ENCODE measurements at regions of chr11 and their contacts with region 1.

Region 1: GRCh38 chr11:5684646-5685362 is at the start of gene TRIM5:
- DNase-seq: peak; percentile 89
- H3K4me3 Mint-ChIP-seq: peak within 1 kb of the TSS; percentile 92
- H3K27ac Mint-ChIP-seq: peak within 1 kb of the TSS; percentile 97
- H3K4me1 Mint-ChIP-seq: peaks cover 35% of the 10 kb centered on the region
- H3K27me3 Mint-ChIP-seq: no peaks in the 10 kb centered on the region
- total RNA-seq, gene TRIM5: 18.9 to 21.0 TPM

Region 2: DNA sequence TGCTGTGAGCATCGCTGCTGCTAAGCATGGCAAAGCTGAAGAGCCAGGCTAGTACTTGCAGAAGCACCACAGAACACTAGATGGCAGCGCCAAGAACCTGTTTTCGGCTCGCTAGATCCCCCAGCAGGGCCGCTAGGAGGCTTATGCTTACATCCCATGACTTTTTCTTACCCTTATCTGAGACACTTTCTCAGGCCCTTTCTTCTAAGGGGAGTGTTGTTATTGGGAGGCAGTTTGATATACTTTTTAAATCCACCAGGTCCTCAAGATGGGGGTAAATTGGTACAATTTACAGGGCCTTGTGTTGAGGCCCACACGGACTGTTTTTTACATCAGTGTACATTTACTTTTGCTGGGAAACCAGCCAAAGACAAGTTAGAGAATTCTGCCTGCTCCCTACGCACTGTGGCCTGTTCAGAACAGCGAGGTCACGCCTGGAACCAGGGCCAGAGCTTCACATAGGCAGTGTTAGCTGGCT is 84.4 kb before region 1 on chr11:
- CTCF ChIA-PET with region 1: interaction called, 7 read pairs
- POLR2A ChIA-PET with region 1: no interaction called
- intact Hi-C with region 1: loop called (anchors 1 kb)
- DNase-seq: peak; percentile 72
- H3K4me3 Mint-ChIP-seq: no peak overlapping the region
- H3K27ac Mint-ChIP-seq: no peak overlapping the region
- H3K4me1 Mint-ChIP-seq: peaks cover 8% of the 10 kb centered on the region
- H3K27me3 Mint-ChIP-seq: peaks cover 8% of the 10 kb centered on the region

Region 3: DNA sequence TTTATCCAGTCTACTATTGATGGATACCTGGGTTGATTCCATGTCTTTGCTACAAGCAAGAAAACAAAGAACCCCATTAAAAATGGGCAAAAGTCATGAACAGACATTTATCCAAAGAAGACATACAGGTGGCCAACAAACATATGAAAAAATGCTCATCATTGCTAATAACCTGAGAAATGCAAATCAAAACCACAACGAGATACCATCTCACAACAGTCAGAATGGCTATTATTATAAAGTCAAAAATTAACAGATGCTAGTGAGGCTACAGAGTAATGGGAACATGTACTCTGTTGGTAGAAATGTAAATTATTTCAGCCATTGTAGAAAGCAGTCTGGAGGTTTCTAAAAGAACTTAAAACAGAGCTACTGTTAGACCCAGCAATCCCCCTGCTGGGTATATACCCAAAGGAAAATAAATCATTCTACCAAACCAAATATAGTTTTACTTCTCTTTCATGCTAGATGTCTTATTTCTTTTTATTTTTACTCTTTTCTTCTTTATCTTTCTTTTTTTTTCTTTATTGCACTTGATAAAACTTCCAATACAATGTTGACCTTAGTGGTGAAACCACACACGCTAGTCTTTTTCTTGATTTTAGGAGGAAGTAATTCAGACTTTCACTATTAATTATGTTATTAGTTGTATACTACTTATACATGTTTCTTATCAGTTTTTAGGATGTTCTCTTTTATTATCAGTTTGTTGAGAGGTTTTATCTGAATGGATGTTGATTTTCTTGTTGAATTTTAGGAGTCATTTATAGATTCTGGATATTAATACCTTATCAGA is 19.1 kb after region 1 on chr11:
- CTCF ChIA-PET with region 1: interaction called, 5 read pairs
- POLR2A ChIA-PET with region 1: interaction called, 3 read pairs
- intact Hi-C with region 1: loop called (anchors 2 kb)
- DNase-seq: no peak
- H3K4me3 Mint-ChIP-seq: no peak overlapping the region
- H3K27ac Mint-ChIP-seq: peak overlapping the region; percentile 38
- H3K4me1 Mint-ChIP-seq: peaks cover 40% of the 10 kb centered on the region
- H3K27me3 Mint-ChIP-seq: no peaks in the 10 kb centered on the region

Region 4: DNA sequence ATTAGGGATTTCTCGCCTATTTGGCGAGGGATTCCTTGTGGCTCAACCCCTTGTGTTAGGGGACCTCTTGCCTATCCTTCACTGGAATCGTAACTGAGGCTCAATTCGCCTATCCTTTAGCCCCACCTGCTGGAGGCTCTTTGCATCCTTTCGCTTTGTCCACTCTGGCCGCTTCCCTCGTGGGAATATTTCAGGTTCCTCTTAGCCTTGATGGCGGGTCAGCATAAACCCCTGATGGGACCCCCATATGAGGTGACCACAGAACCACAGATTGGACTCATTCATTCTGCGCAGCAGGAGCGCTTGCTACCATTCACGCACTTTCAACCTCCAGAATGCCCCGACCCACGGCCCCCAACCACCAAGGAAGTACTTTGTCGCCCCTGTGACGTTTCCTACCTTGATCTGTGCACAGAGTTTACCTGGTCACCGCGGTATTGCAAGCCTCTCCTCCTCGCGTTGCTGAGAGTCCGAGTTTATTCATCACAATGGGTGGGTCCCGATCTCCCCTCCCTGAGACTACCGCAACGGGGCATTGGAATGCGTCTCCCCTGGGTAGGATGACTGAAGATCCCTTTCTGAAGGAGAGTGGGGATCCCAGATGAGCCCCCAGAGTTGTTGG is 123.8 kb after region 1 on chr11 and contains the start of gene OR52N2:
- CTCF ChIA-PET with region 1: interaction called, 9 read pairs
- POLR2A ChIA-PET with region 1: interaction called, 4 read pairs
- intact Hi-C with region 1: loop called (anchors 1 kb)
- DNase-seq: peak; percentile 82
- H3K4me3 Mint-ChIP-seq: peak within 1 kb of the TSS; percentile 85
- H3K27ac Mint-ChIP-seq: peak within 1 kb of the TSS; percentile 49
- H3K4me1 Mint-ChIP-seq: peaks cover 5% of the 10 kb centered on the region
- H3K27me3 Mint-ChIP-seq: peaks cover 8% of the 10 kb centered on the region
- total RNA-seq, gene OR52N2: not detected

Region 5: GRCh38 chr11:7672960-7673723 is 1988.3 kb after region 1 on chr11 and contains the start of gene CYB5R2:
- CTCF ChIA-PET with region 1: no interaction called
- POLR2A ChIA-PET with region 1: no interaction called
- intact Hi-C with region 1: loop called (anchors 10 kb)
- DNase-seq: peak; percentile 38
- H3K4me3 Mint-ChIP-seq: peak within 1 kb of the TSS; percentile 63
- H3K27ac Mint-ChIP-seq: no peak within 1 kb of the TSS
- H3K4me1 Mint-ChIP-seq: peaks cover 31% of the 10 kb centered on the region
- H3K27me3 Mint-ChIP-seq: peaks cover 33% of the 10 kb centered on the region
- total RNA-seq, gene CYB5R2: 4.4 to 4.7 TPM

Measured in activated CD4-positive, alpha-beta memory T cell treated with anti-CD3 and anti-CD28 coated beads for 36 hours (primary cell).